ENCODE measurements at regions of chr3 and their contacts with region 1.

Region 1: GRCh38 chr3:40584625-40585189 is 59.9 kb downstream of the ZNF621 start:
- DNase-seq: peak; percentile 80 to 90 (median 87)
- ATAC-seq: peak; percentile 97
- H3K4me3 ChIP-seq: no peak overlapping the region
- H3K27ac ChIP-seq: no peak overlapping the region
- H3K4me1 ChIP-seq: 0 out of 5 replicates have a peak, but pooled peaks cover 0 to 3% of the 10 kb centered on the region in 2 experiments
- H3K27me3 ChIP-seq: peaks cover 6 to 32% of the 10 kb centered on the region in 2 experiments; a peak in 3 of 5 replicates
- CTCF ChIP-seq: peak; percentile 94 to 99 (median 94)
- EP300 ChIP-seq: no peak
- POLR2A ChIP-seq: no peak
- RAD21 ChIP-seq: peak; percentile 94 to 96

Region 2: GRCh38 chr3:40649346-40649745 is 64.6 kb after region 1 on chr3:
- CTCF ChIA-PET with region 1: no interaction called
- POLR2A ChIA-PET with region 1: no interaction called
- in situ Hi-C with region 1: no loop called
- intact Hi-C with region 1: no loop called
- DNase-seq: peak in 1 of 4 experiments; percentile 28
- ATAC-seq: peak; percentile 71
- H3K4me3 ChIP-seq: no peak overlapping the region
- H3K27ac ChIP-seq: no peak overlapping the region
- H3K4me1 ChIP-seq: no peaks in the 10 kb centered on the region; a peak in 2 of 5 replicates
- H3K27me3 ChIP-seq: peaks cover 0 to 3% of the 10 kb centered on the region in 2 experiments; a peak in 1 of 5 replicates
- CTCF ChIP-seq: no peak
- EP300 ChIP-seq: no peak
- POLR2A ChIP-seq: no peak
- RAD21 ChIP-seq: no peak

Region 3: GRCh38 chr3:40719660-40720287 is 135.1 kb after region 1 on chr3:
- CTCF ChIA-PET with region 1: no interaction called
- POLR2A ChIA-PET with region 1: no interaction called
- in situ Hi-C with region 1: no loop called
- intact Hi-C with region 1: loop called (anchors 10 kb)
- DNase-seq: peak; percentile 42 to 71 (median 46)
- ATAC-seq: peak; percentile 69
- H3K4me3 ChIP-seq: no peak overlapping the region
- H3K27ac ChIP-seq: no peak overlapping the region
- H3K4me1 ChIP-seq: no peaks in the 10 kb centered on the region
- H3K27me3 ChIP-seq: peaks cover 0 to 6% of the 10 kb centered on the region in 2 experiments; a peak in 1 of 5 replicates
- CTCF ChIP-seq: peak; percentile 23 to 57 (median 51); a peak in 4 of 6 replicates
- EP300 ChIP-seq: no peak
- POLR2A ChIP-seq: no peak
- RAD21 ChIP-seq: peak; percentile 49 to 67; a peak in 3 of 4 replicates

Region 4: GRCh38 chr3:41095702-41096101 is 511.0 kb after region 1 on chr3:
- CTCF ChIA-PET with region 1: interaction called, 7 read pairs
- POLR2A ChIA-PET with region 1: no interaction called
- in situ Hi-C with region 1: no loop called
- intact Hi-C with region 1: loop called (anchors 5 kb)
- DNase-seq: peak; percentile 21 to 32 (median 26)
- ATAC-seq: peak; percentile 78
- H3K4me3 ChIP-seq: no peak overlapping the region
- H3K27ac ChIP-seq: no peak overlapping the region
- H3K4me1 ChIP-seq: peaks cover 0 to 3% of the 10 kb centered on the region in 2 experiments; a peak in 1 of 5 replicates
- H3K27me3 ChIP-seq: peaks cover 0 to 4% of the 10 kb centered on the region in 2 experiments; a peak in 2 of 5 replicates
- CTCF ChIP-seq: peak; percentile 37 to 68 (median 59); a peak in 4 of 6 replicates
- EP300 ChIP-seq: no peak
- POLR2A ChIP-seq: no peak
- RAD21 ChIP-seq: peak; percentile 74 to 79

Region 5: DNA sequence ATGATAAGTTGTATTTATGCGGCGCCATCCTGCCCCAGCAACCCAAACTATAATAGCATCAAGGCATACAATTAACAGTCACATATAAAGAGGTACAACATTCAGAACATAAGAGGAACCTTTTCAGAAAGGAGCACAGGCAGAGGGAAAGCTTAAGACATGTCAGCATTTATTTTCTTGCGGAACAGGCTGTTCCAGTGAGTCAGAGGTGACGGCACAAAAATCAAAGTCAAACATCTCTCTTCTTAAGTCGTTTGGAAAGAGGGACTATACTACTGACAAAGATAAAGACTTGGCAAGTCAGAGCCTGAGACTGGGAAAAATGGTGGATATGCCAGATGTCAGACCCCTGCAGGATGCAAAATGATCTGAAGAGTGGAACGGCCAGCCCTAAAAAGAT is 743.0 kb after region 1 on chr3:
- CTCF ChIA-PET with region 1: no interaction called
- POLR2A ChIA-PET with region 1: no interaction called
- in situ Hi-C with region 1: no loop called
- intact Hi-C with region 1: loop called (anchors 10 kb)
- DNase-seq: no peak
- ATAC-seq: no peak
- H3K4me3 ChIP-seq: no peak overlapping the region
- H3K27ac ChIP-seq: no peak overlapping the region
- H3K4me1 ChIP-seq: no peaks in the 10 kb centered on the region
- H3K27me3 ChIP-seq: no peaks in the 10 kb centered on the region; a peak in 3 of 5 replicates
- CTCF ChIP-seq: no peak
- EP300 ChIP-seq: no peak
- POLR2A ChIP-seq: no peak
- RAD21 ChIP-seq: no peak